ENCODE measurements at regions of chr2 and their contacts with region 1.

Region 1: GRCh38 chr2:237441605-237442274 is 27.8 kb upstream of the COL6A3 start:
- DNase-seq: peak in 7 of 10 donors; percentile 26 to 68 (median 47)
- ATAC-seq: peak; percentile 96
- H3K4me3 Mint-ChIP-seq: peak overlapping the region in 9 of 10 donors; percentile 13 to 68 (median 57)
- H3K27ac Mint-ChIP-seq: peak overlapping the region in 9 of 10 donors; percentile 65 to 93 (median 80)
- H3K4me1 Mint-ChIP-seq: peaks cover 40 to 74% (median 59%) of the 10 kb centered on the region in 4 donors
- H3K27me3 Mint-ChIP-seq: no peaks in the 10 kb centered on the region

Region 2: GRCh38 chr2:237427769-237428506 is 13.8 kb before region 1 on chr2:
- POLR2A ChIA-PET with region 1: interaction called, 18 read pairs
- DNase-seq: peak in 5 of 10 donors; percentile 15 to 79 (median 37)
- ATAC-seq: peak; percentile 48 to 54
- H3K4me3 Mint-ChIP-seq: peak overlapping the region in 9 of 10 donors; percentile 37 to 79 (median 68)
- H3K27ac Mint-ChIP-seq: peak overlapping the region; percentile 23 to 100 (median 88)
- H3K4me1 Mint-ChIP-seq: peaks cover 32 to 89% (median 74%) of the 10 kb centered on the region in 4 donors
- H3K27me3 Mint-ChIP-seq: no peaks in the 10 kb centered on the region

Measured in naive thymus-derived CD8-positive, alpha-beta T cell (primary cell).